ENCODE measurements at regions of chr3 and their contacts with region 1.

Region 1: DNA sequence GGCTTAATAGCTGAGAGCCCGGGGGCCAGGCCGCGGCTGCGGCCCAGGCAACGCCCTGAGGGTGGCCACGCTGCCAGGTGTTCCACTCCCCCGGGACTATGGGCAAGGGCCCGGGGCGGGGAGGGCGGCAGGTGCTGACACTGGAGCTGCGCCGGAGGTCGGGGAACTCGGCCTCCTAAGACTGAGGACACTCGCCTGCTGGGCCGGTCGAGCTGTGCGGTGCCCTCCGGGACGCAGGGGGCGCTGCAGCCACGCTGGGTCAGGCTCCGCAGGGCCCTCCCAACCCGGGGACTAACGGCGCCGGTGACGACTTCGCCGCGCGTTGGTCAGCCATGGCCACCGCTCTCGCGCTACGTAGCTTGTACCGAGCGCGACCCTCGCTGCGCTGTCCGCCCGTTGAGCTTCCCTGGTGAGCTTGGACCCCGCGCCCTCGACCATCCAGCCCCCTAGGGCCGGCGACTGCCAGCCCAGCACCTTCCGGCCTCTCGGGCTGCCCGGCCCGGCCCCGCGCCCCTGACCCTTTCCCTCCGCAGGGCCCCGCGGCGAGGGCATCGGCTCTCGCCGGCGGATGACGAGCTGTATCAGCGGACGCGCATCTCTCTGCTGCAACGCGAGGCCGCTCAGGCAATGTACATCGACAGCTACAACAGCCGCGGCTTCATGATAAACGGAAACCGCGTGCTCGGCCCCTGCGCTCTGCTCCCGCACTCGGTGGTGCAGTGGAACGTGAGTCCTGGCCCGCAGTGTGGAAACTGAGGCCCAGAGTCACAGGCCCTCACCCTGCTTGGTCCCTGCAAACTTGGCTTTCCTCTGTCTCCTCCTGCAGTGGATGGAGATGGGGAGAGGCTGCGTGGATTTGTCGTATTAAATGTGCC is at the start of gene NDUFAF3:
- DNase-seq: peak; percentile 93
- H3K4me3 Mint-ChIP-seq: peak within 1 kb of the TSS; percentile 98
- H3K27ac Mint-ChIP-seq: peak within 1 kb of the TSS; percentile 98
- H3K4me1 Mint-ChIP-seq: peaks cover 67% of the 10 kb centered on the region
- H3K27me3 Mint-ChIP-seq: no peaks in the 10 kb centered on the region
- total RNA-seq, gene NDUFAF3: 98.1 to 108 TPM

Region 2: GRCh38 chr3:48716982-48717746 is 304.9 kb before region 1 on chr3 and contains the start of gene IP6K2:
- CTCF ChIA-PET with region 1: interaction called, 3 read pairs
- POLR2A ChIA-PET with region 1: interaction called, 20 read pairs
- DNase-seq: peak; percentile 99
- H3K4me3 Mint-ChIP-seq: peak within 1 kb of the TSS; percentile 100
- H3K27ac Mint-ChIP-seq: peak within 1 kb of the TSS; percentile 96
- H3K4me1 Mint-ChIP-seq: peaks cover 44% of the 10 kb centered on the region
- H3K27me3 Mint-ChIP-seq: peaks cover 19% of the 10 kb centered on the region
- total RNA-seq, gene IP6K2: 52.7 to 57.8 TPM

Region 3: DNA sequence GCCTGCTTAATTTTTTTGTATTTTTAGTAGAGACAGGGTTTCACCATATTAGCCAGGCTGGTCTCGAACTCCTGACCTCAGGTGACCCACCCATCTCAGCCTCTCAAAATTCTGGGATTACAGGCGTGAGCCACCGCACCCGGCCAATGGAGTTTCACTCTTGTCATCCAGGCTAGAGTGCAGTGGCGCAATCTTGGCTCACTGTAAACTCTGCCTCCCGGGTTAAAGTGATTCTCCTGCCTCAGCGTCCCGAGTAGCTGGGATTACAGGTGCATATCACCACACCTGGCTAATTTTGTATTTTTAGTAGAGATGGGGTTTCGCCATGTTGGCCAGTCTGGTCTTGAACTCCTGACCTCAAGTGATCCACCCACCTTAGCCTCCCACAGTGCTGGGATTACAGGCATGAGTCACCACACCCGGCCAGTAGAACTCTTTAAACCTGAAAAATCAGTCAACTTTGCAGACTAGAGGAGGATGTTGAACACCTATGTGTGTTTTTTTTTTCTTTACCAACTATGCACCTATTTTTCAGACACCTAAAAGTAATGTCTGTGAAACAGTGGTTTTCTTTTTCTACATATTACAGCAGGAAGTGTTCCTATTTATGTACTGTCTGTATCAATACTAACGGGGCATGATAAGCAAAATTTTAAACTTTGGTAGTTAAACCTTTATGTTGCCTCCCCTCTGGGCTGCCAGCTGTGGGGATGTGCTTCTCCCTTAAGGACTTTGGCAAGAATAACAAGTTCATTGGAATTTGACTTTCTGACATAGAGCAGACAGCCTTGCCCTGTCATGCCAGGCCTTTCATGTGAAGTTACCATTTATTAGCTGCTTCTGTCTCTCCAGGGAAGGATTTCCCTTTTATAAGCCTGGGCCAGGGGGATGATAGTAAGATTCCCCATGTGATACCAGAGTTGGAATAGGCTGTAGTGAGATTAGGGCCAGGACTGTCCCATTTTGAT is 95.3 kb before region 1 on chr3:
- CTCF ChIA-PET with region 1: no interaction called
- POLR2A ChIA-PET with region 1: interaction called, 14 read pairs
- DNase-seq: no peak
- H3K4me3 Mint-ChIP-seq: no peak overlapping the region
- H3K27ac Mint-ChIP-seq: peak overlapping the region; percentile 66
- H3K4me1 Mint-ChIP-seq: peaks cover 67% of the 10 kb centered on the region
- H3K27me3 Mint-ChIP-seq: no peaks in the 10 kb centered on the region

Region 4: GRCh38 chr3:48989796-48990635 is 32.0 kb before region 1 on chr3 and contains the start of gene P4HTM:
- CTCF ChIA-PET with region 1: interaction called, 95 read pairs
- POLR2A ChIA-PET with region 1: interaction called, 190 read pairs
- DNase-seq: peak; percentile 79
- H3K4me3 Mint-ChIP-seq: peak within 1 kb of the TSS; percentile 92
- H3K27ac Mint-ChIP-seq: peak within 1 kb of the TSS; percentile 90
- H3K4me1 Mint-ChIP-seq: peaks cover 45% of the 10 kb centered on the region
- H3K27me3 Mint-ChIP-seq: no peaks in the 10 kb centered on the region
- total RNA-seq, gene P4HTM: 48.4 to 49.9 TPM

Region 5: DNA sequence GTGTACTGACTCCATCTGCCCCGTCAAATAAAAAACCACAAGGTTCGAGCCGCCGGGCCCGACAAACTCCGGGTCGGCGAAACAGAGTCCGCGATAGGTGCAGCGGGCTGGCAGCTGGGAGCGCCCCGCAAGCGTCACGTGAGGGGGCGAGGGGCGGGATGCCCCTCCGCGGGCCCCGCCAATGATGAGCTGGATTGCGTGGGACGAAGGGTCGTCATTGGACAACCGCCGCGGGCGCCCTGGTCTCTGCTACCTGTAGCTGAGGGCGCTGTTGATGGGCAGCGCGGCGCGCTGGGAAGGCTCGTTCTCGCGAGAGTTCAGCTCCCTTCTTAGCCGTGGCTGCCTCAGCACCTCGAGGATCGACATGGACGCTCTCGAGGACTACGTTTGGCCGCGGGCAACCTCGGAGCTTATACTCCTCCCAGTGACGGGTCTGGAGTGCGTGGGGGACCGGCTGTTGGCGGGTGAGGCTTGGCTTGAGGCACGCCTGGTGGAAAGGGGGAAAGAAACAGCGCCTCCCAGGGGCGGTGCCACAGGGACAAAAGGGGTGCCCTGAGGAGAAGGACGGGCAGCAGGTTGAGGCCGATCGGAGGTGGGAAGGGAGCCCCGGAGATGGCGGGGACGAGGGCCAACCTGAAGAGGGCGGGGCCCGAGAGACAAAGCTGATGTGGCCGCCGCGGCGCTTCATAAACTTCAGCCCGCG is 14.8 kb before region 1 on chr3 and contains the start of gene WDR6:
- CTCF ChIA-PET with region 1: interaction called, 117 read pairs
- POLR2A ChIA-PET with region 1: interaction called, 309 read pairs
- DNase-seq: peak; percentile 98
- H3K4me3 Mint-ChIP-seq: peak within 1 kb of the TSS; percentile 99
- H3K27ac Mint-ChIP-seq: peak within 1 kb of the TSS; percentile 99
- H3K4me1 Mint-ChIP-seq: peaks cover 34% of the 10 kb centered on the region
- H3K27me3 Mint-ChIP-seq: no peaks in the 10 kb centered on the region
- total RNA-seq, gene WDR6: 135 to 148 TPM

Region 6: GRCh38 chr3:49120438-49121131 is 98.5 kb after region 1 on chr3 and contains the start of gene USP19:
- CTCF ChIA-PET with region 1: interaction called, 15 read pairs
- POLR2A ChIA-PET with region 1: interaction called, 11 read pairs
- DNase-seq: peak; percentile 95
- H3K4me3 Mint-ChIP-seq: peak within 1 kb of the TSS; percentile 83
- H3K27ac Mint-ChIP-seq: peak within 1 kb of the TSS; percentile 90
- H3K4me1 Mint-ChIP-seq: peaks cover 24% of the 10 kb centered on the region
- H3K27me3 Mint-ChIP-seq: no peaks in the 10 kb centered on the region
- total RNA-seq, gene USP19: 61.2 to 61.5 TPM